Naive thymus-derived CD4-positive, alpha-beta T cell (primary cell): ENCODE measurements at regions of chr6 and their contacts with region 1.

Region 1: GRCh38 chr6:111478749-111479148 is 4.3 kb downstream of the REV3L start:
- DNase-seq: peak in 7 of 9 donors; percentile 23 to 61 (median 44)
- ATAC-seq: peak; percentile 21
- H3K4me3 ChIP-seq: no peak overlapping the region
- H3K4me3 Mint-ChIP-seq: peak overlapping the region in 1 of 10 donors; percentile 26
- H3K27ac ChIP-seq: peak overlapping the region; percentile 24
- H3K27ac Mint-ChIP-seq: peak overlapping the region in 7 of 9 donors; percentile 31 to 77 (median 62)
- H3K4me1 ChIP-seq: peaks cover 13 to 14% of the 10 kb centered on the region in 2 donors
- H3K4me1 Mint-ChIP-seq: peaks cover 28 to 57% (median 50%) of the 10 kb centered on the region in 7 donors
- H3K27me3 ChIP-seq: no peaks in the 10 kb centered on the region
- H3K27me3 Mint-ChIP-seq: no peaks in the 10 kb centered on the region

Region 2: DNA sequence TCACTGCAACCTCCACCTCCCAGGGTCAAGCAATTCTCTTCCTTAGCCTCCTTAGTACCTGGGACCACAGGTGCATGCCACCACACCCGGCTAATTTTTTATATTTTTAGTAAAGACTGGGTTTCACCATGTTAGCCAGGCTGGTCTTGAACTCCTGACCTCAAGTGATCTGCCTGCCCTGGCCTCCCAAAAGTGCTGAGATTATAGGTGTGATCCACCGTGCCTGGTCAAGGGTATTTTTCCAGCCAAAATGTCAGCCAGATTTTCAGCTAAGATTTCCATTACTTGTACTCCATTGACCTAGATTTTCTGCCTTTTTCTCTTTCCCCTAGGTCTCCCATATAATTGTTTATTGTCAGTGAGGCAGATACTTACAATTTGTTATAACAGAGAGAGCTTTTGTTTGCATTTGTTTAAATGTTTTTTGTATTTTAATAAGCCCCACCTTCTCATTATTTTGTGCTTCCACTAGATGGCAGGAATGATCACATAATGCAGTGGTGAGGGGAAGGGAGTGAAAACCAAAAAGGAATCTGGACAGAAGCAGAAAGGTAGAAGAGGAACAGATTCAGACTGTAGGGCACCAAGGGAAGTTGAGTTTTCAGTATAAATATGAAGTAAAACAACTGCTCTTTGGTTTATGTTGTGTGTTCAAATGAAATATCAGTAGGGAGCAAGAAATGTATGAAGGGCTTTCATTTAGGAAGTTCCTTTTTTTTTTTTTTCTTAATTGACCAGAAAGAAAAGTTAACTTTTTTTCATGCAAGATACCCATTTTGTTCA is 467.2 kb before region 1 on chr6:
- CTCF ChIA-PET with region 1: no interaction called
- POLR2A ChIA-PET with region 1: no interaction called
- intact Hi-C with region 1: loop called in 1 of 2 experiments (anchors 1 kb)
- DNase-seq: peak in 7 of 9 donors; percentile 18 to 58 (median 50)
- ATAC-seq: peak; percentile 71
- H3K4me3 ChIP-seq: no peak overlapping the region
- H3K4me3 Mint-ChIP-seq: no peak overlapping the region
- H3K27ac ChIP-seq: no peak overlapping the region
- H3K27ac Mint-ChIP-seq: peak overlapping the region in 1 of 9 donors; percentile 16
- H3K4me1 ChIP-seq: no peaks in the 10 kb centered on the region
- H3K4me1 Mint-ChIP-seq: peaks cover 3 to 13% (median 5%) of the 10 kb centered on the region in 7 donors
- H3K27me3 ChIP-seq: no peaks in the 10 kb centered on the region
- H3K27me3 Mint-ChIP-seq: no peaks in the 10 kb centered on the region

Region 3: GRCh38 chr6:111361648-111362047 is 117.1 kb before region 1 on chr6:
- CTCF ChIA-PET with region 1: interaction called, 8 read pairs
- POLR2A ChIA-PET with region 1: no interaction called
- intact Hi-C with region 1: loop called in 1 of 2 experiments (anchors 1 kb)
- DNase-seq: no peak
- ATAC-seq: no peak
- H3K4me3 ChIP-seq: no peak overlapping the region
- H3K4me3 Mint-ChIP-seq: no peak overlapping the region
- H3K27ac ChIP-seq: no peak overlapping the region
- H3K27ac Mint-ChIP-seq: no peak overlapping the region
- H3K4me1 ChIP-seq: no peaks in the 10 kb centered on the region
- H3K4me1 Mint-ChIP-seq: no peaks in the 10 kb centered on the region
- H3K27me3 ChIP-seq: no peaks in the 10 kb centered on the region
- H3K27me3 Mint-ChIP-seq: no peaks in the 10 kb centered on the region

Region 4: GRCh38 chr6:111399626-111400025 is 79.1 kb before region 1 on chr6:
- CTCF ChIA-PET with region 1: no interaction called
- POLR2A ChIA-PET with region 1: no interaction called
- intact Hi-C with region 1: loop called in 1 of 2 experiments (anchors 5 kb)
- DNase-seq: no peak
- ATAC-seq: no peak
- H3K4me3 ChIP-seq: no peak overlapping the region
- H3K4me3 Mint-ChIP-seq: no peak overlapping the region
- H3K27ac ChIP-seq: no peak overlapping the region
- H3K27ac Mint-ChIP-seq: no peak overlapping the region
- H3K4me1 ChIP-seq: no peaks in the 10 kb centered on the region
- H3K4me1 Mint-ChIP-seq: peaks cover 0 to 3% (median 0%) of the 10 kb centered on the region in 7 donors
- H3K27me3 ChIP-seq: no peaks in the 10 kb centered on the region
- H3K27me3 Mint-ChIP-seq: no peaks in the 10 kb centered on the region

Region 5: DNA sequence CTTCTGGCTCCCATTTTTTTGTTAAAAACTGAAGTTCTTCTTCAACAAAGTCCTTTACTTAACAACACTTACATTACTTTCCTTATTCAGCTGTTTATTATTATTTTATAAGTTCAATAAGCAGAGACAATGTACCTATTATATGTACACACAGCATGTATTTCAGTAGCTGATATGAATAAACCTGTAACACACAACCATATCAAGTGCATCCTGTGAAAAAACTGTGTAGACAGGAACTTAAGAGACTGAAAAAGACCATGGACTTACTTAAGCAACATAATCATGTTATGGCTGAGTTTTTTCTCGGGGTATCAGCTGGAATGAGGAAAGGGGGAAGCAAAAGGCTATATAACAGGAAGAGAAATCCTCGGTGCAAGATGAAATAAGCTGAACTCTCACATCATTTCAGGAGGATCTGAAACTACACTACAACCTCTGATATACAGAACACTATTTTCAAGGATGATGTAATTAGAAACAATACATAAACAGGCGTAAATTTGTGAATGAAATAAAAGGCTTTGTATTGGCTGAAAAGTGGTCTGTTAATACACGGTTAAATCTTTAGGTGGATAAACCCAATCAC is 66.7 kb before region 1 on chr6:
- CTCF ChIA-PET with region 1: no interaction called
- POLR2A ChIA-PET with region 1: no interaction called
- intact Hi-C with region 1: loop called (anchors 5 kb)
- DNase-seq: no peak
- ATAC-seq: peak; percentile 62
- H3K4me3 ChIP-seq: no peak overlapping the region
- H3K4me3 Mint-ChIP-seq: no peak overlapping the region
- H3K27ac ChIP-seq: no peak overlapping the region
- H3K27ac Mint-ChIP-seq: no peak overlapping the region
- H3K4me1 ChIP-seq: no peaks in the 10 kb centered on the region
- H3K4me1 Mint-ChIP-seq: peaks cover 0 to 23% (median 5%) of the 10 kb centered on the region in 7 donors
- H3K27me3 ChIP-seq: no peaks in the 10 kb centered on the region
- H3K27me3 Mint-ChIP-seq: no peaks in the 10 kb centered on the region

Region 6: GRCh38 chr6:111417181-111417585 is 61.6 kb before region 1 on chr6:
- CTCF ChIA-PET with region 1: no interaction called
- POLR2A ChIA-PET with region 1: no interaction called
- intact Hi-C with region 1: loop called (anchors 5 kb)
- DNase-seq: no peak
- ATAC-seq: no peak
- H3K4me3 ChIP-seq: no peak overlapping the region
- H3K4me3 Mint-ChIP-seq: no peak overlapping the region
- H3K27ac ChIP-seq: no peak overlapping the region
- H3K27ac Mint-ChIP-seq: no peak overlapping the region
- H3K4me1 ChIP-seq: no peaks in the 10 kb centered on the region
- H3K4me1 Mint-ChIP-seq: peaks cover 0 to 12% (median 8%) of the 10 kb centered on the region in 7 donors
- H3K27me3 ChIP-seq: no peaks in the 10 kb centered on the region
- H3K27me3 Mint-ChIP-seq: no peaks in the 10 kb centered on the region

Region 7: GRCh38 chr6:112163295-112164257 is 684.8 kb after region 1 on chr6:
- CTCF ChIA-PET with region 1: no interaction called
- POLR2A ChIA-PET with region 1: no interaction called
- intact Hi-C with region 1: loop called in 1 of 2 experiments (anchors 1 kb)
- DNase-seq: peak; percentile 43 to 81 (median 64)
- ATAC-seq: peak; percentile 97
- H3K4me3 ChIP-seq: no peak overlapping the region
- H3K4me3 Mint-ChIP-seq: peak overlapping the region; percentile 49 to 88 (median 79)
- H3K27ac ChIP-seq: no peak overlapping the region
- H3K27ac Mint-ChIP-seq: peak overlapping the region in 7 of 9 donors; percentile 10 to 79 (median 48)
- H3K4me1 ChIP-seq: peaks cover 3 to 7% of the 10 kb centered on the region in 2 donors
- H3K4me1 Mint-ChIP-seq: peaks cover 9 to 18% (median 14%) of the 10 kb centered on the region in 7 donors
- H3K27me3 ChIP-seq: no peaks in the 10 kb centered on the region
- H3K27me3 Mint-ChIP-seq: peaks cover 25 to 60% (median 48%) of the 10 kb centered on the region in 5 donors